Activated CD4-positive, alpha-beta T cell treated with anti-CD3 and anti-CD28 coated beads for 36 hours (primary cell): ENCODE measurements at regions of chr17 and their contacts with region 1.

Region 1: DNA sequence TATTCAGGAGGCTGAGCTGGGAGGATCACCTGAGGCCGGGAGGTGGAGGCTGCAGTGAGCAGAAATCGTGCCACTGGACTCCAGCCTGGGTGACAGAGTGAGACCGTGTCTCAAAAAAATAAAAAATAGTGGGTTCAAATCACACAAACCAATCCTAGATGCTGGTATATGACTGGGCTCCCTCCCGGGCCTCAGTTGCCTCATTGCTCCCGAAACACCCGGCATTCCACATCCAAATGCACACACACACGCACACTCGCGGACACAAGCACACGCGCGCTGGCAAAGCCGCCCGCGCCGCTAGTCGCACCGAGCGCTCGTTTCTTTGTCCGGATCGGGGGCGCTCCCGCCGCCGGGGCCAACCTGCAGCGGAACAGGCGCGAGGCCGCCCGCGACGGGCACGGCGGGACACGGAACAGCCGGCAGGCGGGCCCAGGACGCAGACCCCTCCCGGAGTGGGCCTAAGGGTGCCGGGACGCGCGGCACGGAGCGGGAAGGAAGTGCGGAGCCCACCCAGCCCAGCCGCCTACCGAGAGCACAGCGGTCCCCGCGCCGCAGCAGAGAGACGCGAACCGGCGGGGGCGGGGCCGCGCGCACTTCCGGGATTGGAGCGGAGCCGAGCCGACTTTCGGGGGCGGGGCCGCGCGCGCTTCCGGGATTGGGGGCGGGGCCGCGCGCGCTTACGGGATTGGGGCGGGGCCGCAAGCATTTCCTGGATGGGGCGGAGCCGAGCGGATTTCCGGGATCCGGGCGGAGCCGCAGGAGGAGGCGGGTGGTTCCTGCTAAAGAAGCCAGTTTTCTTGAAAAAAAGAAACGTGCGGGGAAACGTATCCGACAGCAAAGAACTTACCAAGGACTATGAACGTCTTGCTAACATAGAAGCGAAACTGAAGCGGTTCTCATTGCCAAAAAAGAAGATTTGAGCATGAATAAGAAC is at the start of gene CYBC1:
- DNase-seq: peak; percentile 98
- ATAC-seq: peak; percentile 69
- H3K4me3 Mint-ChIP-seq: peak within 1 kb of the TSS; percentile 87
- H3K27ac Mint-ChIP-seq: peak within 1 kb of the TSS; percentile 97
- H3K4me1 Mint-ChIP-seq: peaks cover 46% of the 10 kb centered on the region
- H3K27me3 Mint-ChIP-seq: no peaks in the 10 kb centered on the region
- total RNA-seq, gene CYBC1: 286 to 329 TPM

Region 2: DNA sequence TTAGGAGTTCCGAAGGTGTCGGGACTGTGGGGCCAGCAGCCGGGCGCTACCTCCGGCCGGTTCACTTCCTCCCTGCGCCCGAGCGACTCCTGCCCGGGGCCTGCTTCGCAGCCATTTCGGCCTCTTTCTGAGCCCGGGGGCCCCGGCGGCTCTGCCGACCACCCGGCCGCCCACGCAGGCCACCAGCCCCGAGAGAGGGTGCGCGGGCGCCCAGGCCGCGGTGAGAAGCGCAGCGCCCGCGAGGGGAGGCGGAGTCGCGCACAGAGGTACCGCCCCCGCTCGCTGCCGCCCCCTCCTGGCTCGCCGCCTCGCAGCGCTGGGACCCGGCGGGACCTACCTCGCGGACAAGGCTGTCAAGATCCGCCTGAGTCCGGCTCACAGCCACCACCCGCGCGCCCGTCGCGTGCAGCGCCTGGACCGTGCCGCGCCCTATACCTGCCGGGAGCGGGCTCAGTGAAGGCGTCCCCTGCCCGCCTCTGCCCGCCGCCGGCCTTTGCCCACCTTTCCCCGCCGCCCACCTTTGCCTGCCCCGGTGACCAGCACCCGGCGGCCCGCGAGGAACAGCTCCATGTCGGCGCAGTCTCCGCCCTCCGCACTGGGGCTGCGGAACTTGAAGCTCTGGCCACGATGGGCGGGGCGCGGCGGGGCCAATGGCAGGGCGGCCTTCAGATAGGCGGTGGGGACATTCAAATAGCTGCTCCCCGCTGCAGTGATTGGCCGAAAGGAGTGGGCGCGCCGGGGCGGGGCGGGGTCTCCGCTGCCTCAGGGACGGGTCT is 413.1 kb before region 1 on chr17 and contains the start of gene DCXR:
- CTCF ChIA-PET with region 1: no interaction called
- POLR2A ChIA-PET with region 1: no interaction called
- intact Hi-C with region 1: loop called in 1 of 2 experiments (anchors 2 kb)
- DNase-seq: peak; percentile 97
- ATAC-seq: peak; percentile 97
- H3K4me3 Mint-ChIP-seq: peak within 1 kb of the TSS; percentile 82
- H3K27ac Mint-ChIP-seq: peak within 1 kb of the TSS; percentile 80
- H3K4me1 Mint-ChIP-seq: peaks cover 23% of the 10 kb centered on the region
- H3K27me3 Mint-ChIP-seq: no peaks in the 10 kb centered on the region
- total RNA-seq, gene DCXR: 105 to 166 TPM

Region 3: GRCh38 chr17:82283208-82283749 is 167.2 kb before region 1 on chr17:
- CTCF ChIA-PET with region 1: no interaction called
- POLR2A ChIA-PET with region 1: interaction called, 14 read pairs
- intact Hi-C with region 1: no loop called
- DNase-seq: peak; percentile 87
- ATAC-seq: peak; percentile 93
- H3K4me3 Mint-ChIP-seq: no peak overlapping the region
- H3K27ac Mint-ChIP-seq: peak overlapping the region; percentile 77
- H3K4me1 Mint-ChIP-seq: peaks cover 43% of the 10 kb centered on the region
- H3K27me3 Mint-ChIP-seq: no peaks in the 10 kb centered on the region

Region 4: GRCh38 chr17:82388223-82388921 is 62.1 kb before region 1 on chr17:
- CTCF ChIA-PET with region 1: no interaction called
- POLR2A ChIA-PET with region 1: no interaction called
- intact Hi-C with region 1: no loop called
- DNase-seq: no peak
- ATAC-seq: no peak
- H3K4me3 Mint-ChIP-seq: no peak overlapping the region
- H3K27ac Mint-ChIP-seq: no peak overlapping the region
- H3K4me1 Mint-ChIP-seq: no peaks in the 10 kb centered on the region
- H3K27me3 Mint-ChIP-seq: peaks cover 2% of the 10 kb centered on the region

Region 5: GRCh38 chr17:82494236-82495055 is 44.0 kb after region 1 on chr17:
- CTCF ChIA-PET with region 1: interaction called, 3 read pairs
- POLR2A ChIA-PET with region 1: no interaction called
- intact Hi-C with region 1: loop called in 1 of 2 experiments (anchors 1 kb)
- DNase-seq: peak; percentile 93
- ATAC-seq: peak; percentile 80
- H3K4me3 Mint-ChIP-seq: peak overlapping the region; percentile 60
- H3K27ac Mint-ChIP-seq: peak overlapping the region; percentile 76
- H3K4me1 Mint-ChIP-seq: peaks cover 14% of the 10 kb centered on the region
- H3K27me3 Mint-ChIP-seq: no peaks in the 10 kb centered on the region

Region 6: GRCh38 chr17:82551779-82552457 is 101.5 kb after region 1 on chr17:
- CTCF ChIA-PET with region 1: interaction called, 3 read pairs
- POLR2A ChIA-PET with region 1: no interaction called
- intact Hi-C with region 1: loop called (anchors 1 to 5 kb)
- DNase-seq: peak; percentile 90
- ATAC-seq: peak; percentile 100
- H3K4me3 Mint-ChIP-seq: no peak overlapping the region
- H3K27ac Mint-ChIP-seq: peak overlapping the region; percentile 56
- H3K4me1 Mint-ChIP-seq: peaks cover 41% of the 10 kb centered on the region
- H3K27me3 Mint-ChIP-seq: no peaks in the 10 kb centered on the region

Region 7: GRCh38 chr17:82698065-82698973 is 247.9 kb after region 1 on chr17 and contains the start of gene RAB40B:
- CTCF ChIA-PET with region 1: no interaction called
- POLR2A ChIA-PET with region 1: no interaction called
- intact Hi-C with region 1: loop called in 1 of 2 experiments (anchors 5 kb)
- DNase-seq: peak; percentile 99
- ATAC-seq: peak; percentile 99
- H3K4me3 Mint-ChIP-seq: peak within 1 kb of the TSS; percentile 67
- H3K27ac Mint-ChIP-seq: peak within 1 kb of the TSS; percentile 51
- H3K4me1 Mint-ChIP-seq: peaks cover 10% of the 10 kb centered on the region
- H3K27me3 Mint-ChIP-seq: peaks cover 3% of the 10 kb centered on the region
- total RNA-seq, gene RAB40B: 3.2 to 4.1 TPM

Region 8: GRCh38 chr17:82751571-82752370 is 301.3 kb after region 1 on chr17 and contains the start of gene TBCD:
- CTCF ChIA-PET with region 1: no interaction called
- POLR2A ChIA-PET with region 1: no interaction called
- intact Hi-C with region 1: loop called in 1 of 2 experiments (anchors 1 kb)
- DNase-seq: peak; percentile 95
- ATAC-seq: peak; percentile 83
- H3K4me3 Mint-ChIP-seq: peak within 1 kb of the TSS; percentile 84
- H3K27ac Mint-ChIP-seq: peak within 1 kb of the TSS; percentile 13
- H3K4me1 Mint-ChIP-seq: peaks cover 26% of the 10 kb centered on the region
- H3K27me3 Mint-ChIP-seq: no peaks in the 10 kb centered on the region
- total RNA-seq, gene TBCD: 83.3 to 97.2 TPM